ENCODE measurements at regions of chr16 and their contacts with region 1.

Region 1: DNA sequence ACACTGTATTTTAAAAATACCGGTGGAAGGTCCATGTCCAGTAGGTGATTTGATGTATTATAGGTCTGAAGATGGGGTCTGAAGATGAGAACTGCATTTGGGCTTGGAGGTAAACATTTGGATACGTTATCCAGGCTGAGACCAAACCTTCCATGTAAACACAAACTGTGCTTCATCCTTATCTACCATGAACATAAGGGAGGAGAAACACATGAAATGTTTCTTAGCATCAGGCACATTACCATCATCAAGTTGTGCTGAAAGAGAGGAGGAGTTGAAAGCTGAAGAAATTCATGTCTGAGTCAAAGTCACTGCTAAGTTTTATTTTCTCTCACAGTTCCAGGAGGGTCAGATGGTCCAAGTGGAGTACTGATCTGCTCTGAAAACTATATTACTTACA is 11.4 kb downstream of the SF3B3 start:
- DNase-seq: no peak
- H3K4me3 ChIP-seq: no peak overlapping the region
- CTCF ChIP-seq: no peak

Region 2: DNA sequence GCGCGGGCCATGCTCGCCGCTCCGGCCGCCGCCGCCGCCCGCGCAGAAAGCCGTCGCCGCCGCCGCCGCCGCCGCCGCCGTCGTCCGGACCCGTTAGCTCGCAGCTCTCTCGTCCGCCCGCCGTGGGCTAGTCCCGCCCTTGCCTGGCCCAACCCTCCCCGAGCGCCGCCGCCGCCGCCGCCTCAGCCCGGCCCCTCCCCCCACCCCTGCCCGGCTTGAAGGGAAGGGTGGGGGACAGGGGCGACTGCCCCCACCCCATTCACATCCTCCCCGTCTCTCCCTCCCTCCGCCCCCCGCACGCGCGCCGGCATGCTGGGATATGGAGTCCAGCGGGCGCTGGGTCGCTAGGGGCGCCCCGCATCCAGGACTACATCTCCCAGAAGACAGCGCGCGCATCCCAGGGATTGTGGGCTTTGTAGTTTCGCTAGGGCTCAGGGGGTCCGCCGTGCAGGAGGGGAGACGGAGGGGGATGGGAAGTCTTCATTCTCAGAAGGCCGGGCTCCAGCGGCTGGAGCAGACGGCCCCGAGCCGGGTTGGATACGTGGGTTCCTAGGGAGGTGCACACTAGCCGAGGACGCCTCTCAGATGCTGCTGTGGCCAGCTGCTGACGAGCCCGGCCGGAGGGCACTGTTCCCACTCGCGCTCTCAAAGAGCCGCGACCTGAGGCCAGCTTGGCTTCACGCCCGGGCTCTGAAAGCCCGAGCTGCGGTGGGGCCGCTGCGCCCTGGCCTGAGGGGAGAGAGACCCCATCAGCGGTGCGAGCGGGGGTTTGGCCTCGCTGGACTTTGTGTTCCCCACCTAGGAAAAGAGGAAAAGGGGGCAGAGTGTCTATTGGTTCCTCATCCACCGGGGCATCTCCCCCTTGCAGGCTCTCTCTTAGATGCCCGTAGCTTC is 95.8 kb before region 1 on chr16 and contains the start of gene ST3GAL2:
- in situ Hi-C with region 1: loop called (anchors 5 kb)
- DNase-seq: peak; percentile 78
- H3K4me3 ChIP-seq: peak within 1 kb of the TSS; percentile 85
- CTCF ChIP-seq: no peak

Region 3: DNA sequence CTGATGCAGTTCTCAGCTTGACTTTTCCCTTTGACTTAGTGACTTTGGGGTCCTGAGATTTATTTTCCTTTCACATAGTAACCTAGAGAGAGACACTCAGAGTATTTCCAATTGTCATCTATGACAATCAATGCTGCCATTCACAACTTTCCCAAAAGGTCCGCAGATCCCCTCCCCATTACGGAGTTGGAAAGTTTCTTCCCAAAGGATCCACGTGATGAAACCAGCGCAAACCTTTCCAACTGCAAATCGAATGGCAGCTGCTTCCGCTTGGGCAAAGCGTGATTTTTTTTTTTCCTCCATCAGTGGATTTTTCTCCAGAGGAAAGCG is 81.1 kb before region 1 on chr16:
- in situ Hi-C with region 1: no loop called
- DNase-seq: no peak
- H3K4me3 ChIP-seq: peak overlapping the region; percentile 93
- CTCF ChIP-seq: no peak